Breast epithelium (tissue), 4 donors: ENCODE measurements at regions of chr14 and their contacts with region 1.

Region 1: GRCh38 chr14:51488569-51489220 is 163.0 kb upstream of the FRMD6 start:
- DNase-seq: peak in 1 of 2 donors; percentile 60
- H3K4me3 ChIP-seq: peak overlapping the region in 2 of 3 donors; percentile 24 to 44
- H3K27ac ChIP-seq: peak overlapping the region; percentile 26 to 78
- H3K4me1 ChIP-seq: no peaks in the 10 kb centered on the region
- H3K27me3 ChIP-seq: no peaks in the 10 kb centered on the region
- CTCF ChIP-seq: no peak
- POLR2A ChIP-seq: no peak

Region 2: DNA sequence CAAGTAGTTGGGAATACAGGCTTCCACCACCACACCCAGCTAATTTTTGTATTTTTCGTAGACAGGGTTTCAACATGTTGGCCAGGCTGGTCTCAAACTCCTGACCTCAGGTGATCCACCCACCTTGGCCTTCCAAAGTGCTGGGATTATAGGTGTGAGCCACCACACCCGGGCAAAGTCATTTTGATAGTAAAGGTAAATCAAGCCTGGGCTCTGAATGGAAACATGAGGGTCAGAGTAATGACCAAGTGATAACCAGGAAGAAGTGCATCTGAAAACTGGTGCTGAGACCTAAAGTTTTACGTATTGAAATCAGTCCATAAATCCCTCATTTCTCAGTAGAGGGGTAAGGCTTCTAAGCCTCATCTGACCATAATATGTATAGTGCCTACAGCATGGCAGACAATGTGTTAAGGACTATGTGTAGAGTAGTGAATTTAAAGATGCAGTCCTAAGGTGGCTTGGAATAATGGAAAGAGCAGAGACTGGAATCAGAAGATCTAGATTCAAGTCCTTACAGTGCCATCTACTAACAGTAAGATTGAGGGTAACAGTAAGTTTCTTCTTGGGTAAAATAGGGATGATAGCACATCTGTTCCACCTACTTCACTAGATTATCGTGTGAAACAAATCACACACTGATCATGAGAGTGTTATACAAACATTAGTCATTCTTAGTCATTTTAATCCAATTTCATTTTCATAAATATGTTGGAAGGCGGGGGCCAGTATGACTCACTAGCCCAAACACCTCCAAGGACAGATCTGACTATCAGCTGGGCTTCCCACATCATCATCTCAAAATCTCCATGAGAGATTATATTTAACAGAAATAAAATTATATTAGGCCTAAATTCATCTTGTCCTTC is 967.5 kb before region 1 on chr14:
- intact Hi-C with region 1: no loop called
- DNase-seq: no peak
- H3K4me3 ChIP-seq: no peak overlapping the region
- H3K27ac ChIP-seq: peak overlapping the region; percentile 52 to 70
- H3K4me1 ChIP-seq: peaks cover 0 to 6% of the 10 kb centered on the region in 2 donors
- H3K27me3 ChIP-seq: no peaks in the 10 kb centered on the region
- CTCF ChIP-seq: no peak
- POLR2A ChIP-seq: no peak

Region 3: GRCh38 chr14:51453869-51454268 is 34.8 kb before region 1 on chr14:
- intact Hi-C with region 1: no loop called
- DNase-seq: no peak
- H3K4me3 ChIP-seq: no peak overlapping the region
- H3K27ac ChIP-seq: peak overlapping the region; percentile 45 to 66
- H3K4me1 ChIP-seq: no peaks in the 10 kb centered on the region
- H3K27me3 ChIP-seq: no peaks in the 10 kb centered on the region
- CTCF ChIP-seq: no peak
- POLR2A ChIP-seq: no peak

Region 4: DNA sequence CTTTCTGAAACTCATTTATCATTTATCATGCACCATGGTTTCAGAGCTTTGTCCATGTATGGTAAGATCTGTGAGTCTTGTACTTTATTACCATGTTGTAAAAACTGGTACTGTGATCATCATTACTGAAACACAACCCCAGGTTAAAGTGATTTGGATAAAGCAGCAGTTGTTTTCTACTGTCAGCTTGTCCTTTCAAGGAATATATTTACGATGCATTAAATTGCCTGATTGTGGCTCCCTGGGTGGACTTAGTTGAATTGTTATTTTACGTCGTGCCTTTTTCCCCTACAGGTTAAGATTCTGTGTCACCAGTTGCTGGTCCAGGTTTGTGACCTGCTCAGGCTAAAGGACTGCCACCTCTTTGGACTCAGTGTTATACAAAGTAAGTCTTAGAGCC is 209.2 kb after region 1 on chr14:
- intact Hi-C with region 1: loop called (anchors 5 kb)
- DNase-seq: no peak
- H3K4me3 ChIP-seq: no peak overlapping the region
- H3K27ac ChIP-seq: no peak overlapping the region
- H3K4me1 ChIP-seq: no peaks in the 10 kb centered on the region
- H3K27me3 ChIP-seq: no peaks in the 10 kb centered on the region
- CTCF ChIP-seq: no peak
- POLR2A ChIP-seq: no peak